AG04450 (cell line): ENCODE measurements at regions of chr13 and their contacts with region 1.

Region 1: GRCh38 chr13:21986602-21987001 is 315.7 kb downstream of the FGF9 start:
- DNase-seq: no peak
- H3K4me3 ChIP-seq: no peak overlapping the region
- H3K27ac ChIP-seq: peak overlapping the region; percentile 40
- H3K27me3 ChIP-seq: no peaks in the 10 kb centered on the region
- CTCF ChIP-seq: no peak

Region 2: GRCh38 chr13:22002893-22003292 is 16.3 kb after region 1 on chr13:
- CTCF ChIA-PET with region 1: no interaction called
- POLR2A ChIA-PET with region 1: interaction called, 12 read pairs
- DNase-seq: no peak
- H3K4me3 ChIP-seq: no peak overlapping the region
- H3K27ac ChIP-seq: no peak overlapping the region
- H3K27me3 ChIP-seq: peaks cover 2% of the 10 kb centered on the region
- CTCF ChIP-seq: no peak

Region 3: DNA sequence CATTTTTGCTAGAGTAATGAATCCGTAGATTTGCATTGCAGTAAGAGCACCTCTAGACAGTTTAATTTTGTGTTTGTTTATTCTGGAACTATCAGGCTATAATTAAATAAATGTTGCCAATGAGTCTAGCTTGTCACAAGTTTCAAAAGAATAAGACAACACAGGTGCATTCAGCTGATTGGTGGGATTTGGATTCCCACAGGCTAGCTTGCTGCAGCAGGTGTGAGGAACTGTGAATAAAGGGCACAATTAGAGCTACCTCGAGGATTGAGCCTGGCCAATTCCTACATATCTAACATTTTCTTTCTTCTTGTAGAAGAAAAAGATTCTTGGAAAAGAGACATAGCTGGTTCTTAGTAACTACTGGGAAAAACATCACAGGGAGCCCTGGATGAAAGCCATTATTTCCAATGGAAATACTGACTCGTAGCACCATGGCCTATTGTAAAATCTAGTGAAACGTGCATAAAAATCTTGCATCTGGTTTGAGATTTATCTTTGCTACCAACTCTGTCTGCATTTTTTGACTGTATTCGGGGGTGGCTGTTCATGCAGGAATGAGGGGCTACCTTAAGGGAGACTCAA is 45.2 kb after region 1 on chr13:
- CTCF ChIA-PET with region 1: no interaction called
- POLR2A ChIA-PET with region 1: no interaction called
- DNase-seq: no peak
- H3K4me3 ChIP-seq: no peak overlapping the region
- H3K27ac ChIP-seq: no peak overlapping the region
- H3K27me3 ChIP-seq: peaks cover 5% of the 10 kb centered on the region
- CTCF ChIP-seq: no peak